PC-9 (cell line): ENCODE measurements at regions of chr3 and their contacts with region 1.

Region 1: DNA sequence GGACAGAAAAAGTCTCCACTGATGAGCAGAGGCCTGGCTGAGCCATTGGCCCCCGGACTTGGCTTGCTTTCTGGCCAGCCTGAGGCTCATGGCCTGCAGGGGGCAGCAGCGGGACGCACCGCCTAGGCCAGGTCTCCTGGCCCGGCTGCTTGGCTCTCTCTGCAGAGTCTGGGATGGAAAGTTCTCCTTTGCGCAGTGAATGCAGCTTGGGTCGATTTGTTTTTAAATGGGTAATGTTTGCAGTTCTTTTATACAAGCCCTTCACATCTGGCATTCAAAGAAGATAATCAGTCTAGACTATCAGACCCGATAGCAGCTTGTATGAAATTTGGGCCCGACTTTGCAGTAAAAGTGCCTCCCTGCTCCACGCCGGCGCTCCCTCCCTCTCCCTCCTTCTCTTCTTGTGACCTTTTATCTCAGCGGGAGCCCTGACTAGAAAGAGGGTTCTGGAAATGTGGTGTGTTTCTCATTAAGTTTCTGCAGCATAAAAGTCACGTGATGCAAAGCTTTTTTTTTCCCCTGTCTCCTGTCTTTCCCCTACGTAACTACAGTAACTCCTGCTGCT is 59.9 kb downstream of the ZNF621 start:
- DNase-seq: peak in 1 of 2 experiments; percentile 71
- H3K4me3 ChIP-seq: no peak overlapping the region
- H3K27ac ChIP-seq: no peak overlapping the region
- H3K4me1 ChIP-seq: no peaks in the 10 kb centered on the region
- H3K27me3 ChIP-seq: no peaks in the 10 kb centered on the region
- CTCF ChIP-seq: peak; percentile 90

Region 2: GRCh38 chr3:40452876-40453730 is 131.6 kb before region 1 on chr3:
- CTCF ChIA-PET with region 1: interaction called, 15 read pairs
- POLR2A ChIA-PET with region 1: no interaction called
- intact Hi-C with region 1: no loop called
- DNase-seq: peak; percentile 95 to 97
- H3K4me3 ChIP-seq: peak overlapping the region; percentile 59
- H3K27ac ChIP-seq: peak overlapping the region; percentile 52
- H3K4me1 ChIP-seq: peaks cover 33% of the 10 kb centered on the region
- H3K27me3 ChIP-seq: no peaks in the 10 kb centered on the region
- CTCF ChIP-seq: no peak

Region 3: GRCh38 chr3:40623567-40623966 is 38.9 kb after region 1 on chr3:
- CTCF ChIA-PET with region 1: no interaction called
- POLR2A ChIA-PET with region 1: no interaction called
- intact Hi-C with region 1: no loop called
- DNase-seq: peak; percentile 12 to 82
- H3K4me3 ChIP-seq: no peak overlapping the region
- H3K27ac ChIP-seq: no peak overlapping the region
- H3K4me1 ChIP-seq: peaks cover 20% of the 10 kb centered on the region
- H3K27me3 ChIP-seq: no peaks in the 10 kb centered on the region
- CTCF ChIP-seq: no peak

Region 4: GRCh38 chr3:40847551-40847992 is 262.9 kb after region 1 on chr3:
- CTCF ChIA-PET with region 1: no interaction called
- POLR2A ChIA-PET with region 1: no interaction called
- intact Hi-C with region 1: loop called (anchors 10 kb)
- DNase-seq: peak in 1 of 2 experiments; percentile 3
- H3K4me3 ChIP-seq: no peak overlapping the region
- H3K27ac ChIP-seq: no peak overlapping the region
- H3K4me1 ChIP-seq: peaks cover 15% of the 10 kb centered on the region
- H3K27me3 ChIP-seq: no peaks in the 10 kb centered on the region
- CTCF ChIP-seq: no peak

Region 5: GRCh38 chr3:40877631-40878463 is 293.1 kb after region 1 on chr3:
- CTCF ChIA-PET with region 1: no interaction called
- POLR2A ChIA-PET with region 1: no interaction called
- intact Hi-C with region 1: no loop called
- DNase-seq: no peak
- H3K4me3 ChIP-seq: no peak overlapping the region
- H3K27ac ChIP-seq: no peak overlapping the region
- H3K4me1 ChIP-seq: no peaks in the 10 kb centered on the region
- H3K27me3 ChIP-seq: no peaks in the 10 kb centered on the region
- CTCF ChIP-seq: no peak

Region 6: DNA sequence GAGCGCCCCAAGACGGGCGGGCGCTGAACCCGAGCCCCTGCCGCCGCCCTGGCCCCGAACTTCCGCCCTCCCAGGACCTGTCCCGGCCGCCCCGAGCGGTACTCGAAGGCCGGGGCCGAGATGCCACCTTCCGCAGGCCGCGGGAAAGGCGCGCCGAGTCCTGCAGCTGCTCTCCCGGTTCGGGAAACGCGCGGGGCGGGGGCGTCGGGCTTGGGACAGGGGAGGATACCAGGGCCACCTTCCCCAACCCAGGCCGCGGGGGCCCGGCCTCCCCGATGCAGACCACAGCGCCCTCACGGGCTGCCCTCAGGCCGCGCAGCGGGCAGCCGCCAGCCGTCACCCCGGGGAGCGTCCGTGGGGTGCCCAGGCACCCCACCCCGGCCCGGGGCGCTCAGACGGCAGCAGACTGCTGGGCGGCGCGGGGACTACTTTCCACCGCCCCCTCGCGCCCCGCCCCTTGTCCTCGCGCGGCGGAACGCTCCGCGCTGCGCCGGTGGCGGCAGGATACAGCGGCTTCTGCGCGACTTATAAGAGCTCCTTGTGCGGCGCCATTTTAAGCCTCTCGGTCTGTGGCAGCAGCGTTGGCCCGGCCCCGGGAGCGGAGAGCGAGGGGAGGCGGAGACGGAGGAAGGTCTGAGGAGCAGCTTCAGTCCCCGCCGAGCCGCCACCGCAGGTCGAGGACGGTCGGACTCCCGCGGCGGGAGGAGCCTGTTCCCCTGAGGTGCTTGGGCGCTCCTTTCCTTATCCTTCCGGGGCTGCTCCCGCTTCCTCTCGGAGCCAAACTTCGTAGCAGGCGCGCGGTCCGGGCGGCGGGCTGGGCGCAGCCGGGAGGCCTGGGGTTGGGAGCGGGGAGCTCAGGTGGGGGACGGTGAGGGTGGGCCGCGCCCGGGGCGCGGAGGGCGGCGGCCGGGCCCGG is 614.5 kb after region 1 on chr3 and contains the start of gene CTNNB1:
- CTCF ChIA-PET with region 1: no interaction called
- POLR2A ChIA-PET with region 1: no interaction called
- intact Hi-C with region 1: loop called (anchors 5 kb)
- DNase-seq: peak; percentile 77 to 89
- H3K4me3 ChIP-seq: peak within 1 kb of the TSS; percentile 95
- H3K27ac ChIP-seq: peak within 1 kb of the TSS; percentile 89
- H3K4me1 ChIP-seq: peaks cover 31% of the 10 kb centered on the region
- H3K27me3 ChIP-seq: no peaks in the 10 kb centered on the region
- CTCF ChIP-seq: no peak
- total RNA-seq, gene CTNNB1: 251 and 293 TPM in 2 replicates

Region 7: DNA sequence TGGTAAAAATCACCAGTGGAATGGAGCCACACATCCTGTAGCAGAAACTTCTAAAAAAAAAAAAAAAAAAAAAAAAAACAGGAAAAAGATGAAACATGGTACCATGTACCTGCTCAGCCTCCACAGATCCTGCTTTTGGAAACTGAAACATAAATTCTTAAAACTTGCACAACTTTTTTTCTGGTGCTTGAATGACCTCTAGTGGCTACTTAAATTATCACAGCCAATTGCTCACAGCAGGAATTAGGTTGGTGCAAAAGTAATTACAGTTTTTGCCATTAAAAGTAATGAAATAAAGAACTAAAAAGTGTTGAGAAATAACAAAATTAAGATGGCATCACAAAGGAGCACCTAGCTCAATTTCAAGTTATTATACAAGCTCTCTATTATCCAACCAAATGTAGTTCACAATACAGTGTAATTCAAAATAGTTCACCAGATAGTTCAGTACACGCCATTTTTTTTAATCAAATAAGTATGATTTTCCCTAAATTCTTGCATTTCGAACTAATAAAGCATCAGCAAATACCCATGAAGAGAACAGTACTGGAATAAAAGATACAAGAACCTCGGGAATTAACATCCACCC is 1296.6 kb after region 1 on chr3:
- CTCF ChIA-PET with region 1: no interaction called
- POLR2A ChIA-PET with region 1: no interaction called
- intact Hi-C with region 1: loop called (anchors 1 kb)
- DNase-seq: peak; percentile 13 to 32
- H3K4me3 ChIP-seq: no peak overlapping the region
- H3K27ac ChIP-seq: no peak overlapping the region
- H3K4me1 ChIP-seq: no peaks in the 10 kb centered on the region
- H3K27me3 ChIP-seq: no peaks in the 10 kb centered on the region
- CTCF ChIP-seq: peak; percentile 77

Region 8: DNA sequence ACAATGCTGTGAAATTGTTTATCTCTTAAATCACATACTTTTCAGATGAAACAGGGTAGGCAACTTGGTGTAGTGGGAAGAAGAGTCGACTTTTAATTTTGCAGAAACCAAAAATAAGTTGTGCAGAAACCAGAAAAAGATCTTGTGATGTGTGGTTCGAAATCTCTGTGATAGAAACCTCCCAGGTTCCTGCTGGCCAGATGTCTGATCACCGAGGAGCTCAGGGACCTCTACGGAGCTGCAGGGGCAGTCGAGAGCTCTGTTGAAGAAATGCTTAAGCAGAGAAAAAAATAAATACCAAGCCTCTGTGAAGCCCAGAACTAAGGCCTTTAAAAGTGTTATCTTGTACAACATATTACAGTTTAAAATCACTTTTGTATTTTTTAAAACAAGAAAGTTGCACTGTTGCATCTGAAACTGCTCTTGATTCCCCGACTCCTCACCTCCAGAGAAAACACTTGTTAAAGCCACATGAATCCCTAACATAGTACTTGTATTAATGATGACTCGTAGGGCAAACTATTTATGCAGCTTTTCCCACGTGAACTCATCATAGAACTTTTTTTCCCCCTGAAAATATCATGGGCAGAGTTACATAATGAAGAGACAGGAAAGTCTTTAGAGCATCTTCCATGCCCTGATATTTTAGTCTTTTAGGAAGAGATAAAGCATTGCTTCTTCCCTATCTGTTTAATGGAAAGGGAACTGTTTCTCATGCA is 1630.0 kb after region 1 on chr3:
- CTCF ChIA-PET with region 1: no interaction called
- POLR2A ChIA-PET with region 1: no interaction called
- intact Hi-C with region 1: loop called (anchors 10 kb)
- DNase-seq: no peak
- H3K4me3 ChIP-seq: no peak overlapping the region
- H3K27ac ChIP-seq: no peak overlapping the region
- H3K4me1 ChIP-seq: no peaks in the 10 kb centered on the region
- H3K27me3 ChIP-seq: no peaks in the 10 kb centered on the region
- CTCF ChIP-seq: no peak